ENCODE measurements at regions of chr10 and their contacts with region 1.

Region 1: DNA sequence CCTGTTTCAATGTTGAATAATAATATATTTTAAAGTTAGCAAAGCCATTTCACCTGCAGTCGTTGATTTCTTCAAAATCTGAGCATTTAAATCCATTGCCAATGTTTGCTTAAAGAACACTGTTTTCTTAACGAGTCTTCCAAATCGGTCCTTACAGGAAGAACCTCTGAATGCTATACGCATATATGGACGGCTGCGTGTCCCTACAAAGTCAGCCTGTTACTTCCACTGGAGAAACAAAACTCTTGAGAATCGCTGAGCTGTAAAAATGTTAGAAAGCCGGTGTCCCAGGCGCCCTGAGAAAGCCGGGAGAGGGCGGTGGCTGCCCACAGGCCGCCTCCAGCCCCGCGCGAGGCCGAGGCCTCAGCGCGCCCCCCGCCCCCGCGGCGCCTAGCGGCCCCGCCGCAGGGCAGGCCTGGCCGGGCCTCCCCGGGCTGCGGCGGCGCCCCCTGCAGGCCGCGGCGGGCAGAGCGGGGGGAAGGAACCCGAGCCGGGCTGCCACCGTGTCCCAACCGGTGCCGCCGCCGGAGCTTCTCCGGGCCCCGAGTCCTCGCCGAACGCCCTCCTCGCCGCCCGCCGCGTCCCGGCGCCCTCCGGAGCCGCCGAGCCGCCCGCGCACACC is at the start of gene FHIP2A:
- DNase-seq: no peak
- H3K4me3 ChIP-seq: peak within 1 kb of the TSS; percentile 79
- H3K27ac ChIP-seq: peak within 1 kb of the TSS; percentile 99
- H3K27me3 ChIP-seq: no peaks in the 10 kb centered on the region
- CTCF ChIP-seq: peak; percentile 37; the same call in 1 of the 2 replicates
- polyA plus RNA-seq, gene FHIP2A: 19.2 and 27.3 TPM in 2 replicates

Region 2: GRCh38 chr10:114520453-114520852 is 301.0 kb before region 1 on chr10:
- CTCF ChIA-PET with region 1: interaction called, 10 read pairs
- POLR2A ChIA-PET with region 1: no interaction called
- DNase-seq: no peak
- H3K4me3 ChIP-seq: no peak overlapping the region
- H3K27ac ChIP-seq: no peak overlapping the region
- H3K27me3 ChIP-seq: peaks cover 15% of the 10 kb centered on the region
- CTCF ChIP-seq: no peak

Region 3: DNA sequence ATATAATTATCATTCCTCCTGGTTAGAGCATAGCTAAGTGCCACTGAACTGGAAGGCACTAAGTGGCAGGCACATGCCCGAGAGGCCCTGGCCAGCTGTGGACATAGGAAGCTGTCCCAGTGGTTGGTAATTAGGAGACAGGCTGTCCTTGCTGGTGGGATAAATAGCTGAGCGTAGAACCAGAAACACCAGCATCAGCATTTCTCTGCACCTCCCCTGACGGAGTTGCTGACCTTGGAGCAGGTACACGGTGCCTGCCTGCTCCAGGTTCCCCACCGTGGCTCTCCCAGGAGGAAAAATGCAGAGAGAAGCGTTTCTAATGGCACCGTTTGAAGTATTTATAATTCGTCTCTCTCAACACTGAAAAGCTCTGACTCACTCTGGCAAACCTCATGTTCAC is 157.8 kb before region 1 on chr10:
- CTCF ChIA-PET with region 1: no interaction called
- POLR2A ChIA-PET with region 1: no interaction called
- DNase-seq: no peak
- H3K4me3 ChIP-seq: no peak overlapping the region
- H3K27ac ChIP-seq: no peak overlapping the region
- H3K27me3 ChIP-seq: peaks cover 4% of the 10 kb centered on the region
- CTCF ChIP-seq: no peak

Region 4: GRCh38 chr10:114801411-114801813 is 20.0 kb before region 1 on chr10:
- CTCF ChIA-PET with region 1: interaction called, 12 read pairs
- POLR2A ChIA-PET with region 1: no interaction called
- DNase-seq: no peak
- H3K4me3 ChIP-seq: no peak overlapping the region
- H3K27ac ChIP-seq: no peak overlapping the region
- H3K27me3 ChIP-seq: no peaks in the 10 kb centered on the region
- CTCF ChIP-seq: no peak

Region 5: GRCh38 chr10:114856544-114857282 is 35.3 kb after region 1 on chr10:
- CTCF ChIA-PET with region 1: interaction called, 23 read pairs
- POLR2A ChIA-PET with region 1: interaction called, 12 read pairs
- DNase-seq: peak; percentile 62
- H3K4me3 ChIP-seq: peak overlapping the region; percentile 11; the same call in 1 of the 2 replicates
- H3K27ac ChIP-seq: peak overlapping the region; percentile 94
- H3K27me3 ChIP-seq: no peaks in the 10 kb centered on the region
- CTCF ChIP-seq: no peak

Region 6: DNA sequence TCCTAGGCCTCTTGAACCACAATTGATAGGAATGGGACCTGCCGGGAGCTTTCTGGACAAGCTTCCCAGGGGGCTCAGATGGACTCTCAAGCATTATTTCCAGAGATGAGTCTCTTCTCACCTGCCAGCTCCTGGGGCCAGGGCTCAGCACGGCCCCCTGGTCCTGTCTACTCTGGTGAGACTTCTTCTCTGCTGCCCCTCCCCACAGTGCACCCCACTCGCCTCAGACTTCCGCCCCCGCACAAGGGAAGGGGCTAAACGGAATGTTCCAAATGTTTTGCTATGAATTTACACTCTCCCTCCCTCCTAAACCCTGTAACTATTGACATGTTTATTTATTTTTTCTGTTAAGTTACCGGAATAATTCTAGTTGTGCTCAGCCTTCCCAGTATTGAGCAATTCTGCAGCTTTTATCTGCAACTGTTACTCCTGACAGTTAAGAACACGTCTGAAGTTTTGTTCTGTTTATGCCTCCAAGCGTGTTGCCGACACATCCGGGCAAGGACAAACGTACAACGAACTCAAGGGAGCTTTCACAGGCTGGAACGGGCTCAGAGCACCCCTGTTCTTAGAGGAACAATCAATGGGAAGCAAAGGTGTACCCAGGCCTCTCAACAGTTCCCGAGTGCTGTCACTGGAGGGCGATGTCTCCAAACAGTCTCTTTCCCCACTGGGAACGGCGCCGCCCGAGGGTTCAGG is 55.3 kb after region 1 on chr10:
- CTCF ChIA-PET with region 1: interaction called, 10 read pairs
- POLR2A ChIA-PET with region 1: no interaction called
- DNase-seq: no peak
- H3K4me3 ChIP-seq: no peak overlapping the region
- H3K27ac ChIP-seq: no peak overlapping the region
- H3K27me3 ChIP-seq: no peaks in the 10 kb centered on the region
- CTCF ChIP-seq: peak; percentile 88

Measured in AG04450 (cell line).